Natural killer cell (primary cell): ENCODE measurements at regions of chr10 and their contacts with region 1.

Region 1: DNA sequence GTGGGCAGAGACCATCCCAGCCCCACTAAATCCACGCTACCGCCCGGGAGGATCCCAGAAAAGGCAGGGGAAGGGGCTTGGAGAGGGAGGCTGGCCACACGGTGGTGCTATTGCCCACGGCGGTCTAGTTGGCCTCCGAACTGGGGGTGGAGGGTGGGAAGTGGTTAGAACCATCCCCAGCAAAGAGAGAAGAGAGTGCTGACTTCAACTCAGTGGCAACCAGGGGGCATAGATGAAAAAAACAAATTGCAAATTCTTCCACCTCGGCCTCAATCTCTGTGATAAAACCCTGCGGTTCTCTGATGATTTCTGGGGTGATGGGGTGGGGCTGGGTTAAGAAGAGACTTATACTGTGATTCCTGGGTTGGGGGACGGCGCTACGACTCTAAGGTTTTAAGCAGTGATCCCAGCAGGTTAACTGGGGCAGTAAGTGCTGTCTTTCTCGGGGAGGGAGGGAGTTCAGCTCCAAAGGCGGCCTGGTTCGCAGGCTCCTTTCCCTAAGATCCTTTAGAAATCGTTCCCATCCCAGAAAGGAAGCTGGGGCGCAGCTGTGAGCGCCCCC is 154.5 kb upstream of the LYZL2 start:
- DNase-seq: peak; percentile 63 to 93
- ATAC-seq: peak; percentile 89 to 92 (median 92)
- H3K4me3 ChIP-seq: peak overlapping the region; percentile 43
- H3K4me3 Mint-ChIP-seq: peak overlapping the region; percentile 88
- H3K27ac ChIP-seq: peak overlapping the region; percentile 46
- H3K27ac Mint-ChIP-seq: peak overlapping the region in 1 of 2 donors; percentile 71
- H3K4me1 ChIP-seq: peaks cover 30% of the 10 kb centered on the region
- H3K4me1 Mint-ChIP-seq: peaks cover 11% of the 10 kb centered on the region in 2 donors
- H3K27me3 ChIP-seq: no peaks in the 10 kb centered on the region
- H3K27me3 Mint-ChIP-seq: peaks cover 8 to 15% of the 10 kb centered on the region in 2 donors
- CTCF ChIP-seq: peak; percentile 45

Region 2: DNA sequence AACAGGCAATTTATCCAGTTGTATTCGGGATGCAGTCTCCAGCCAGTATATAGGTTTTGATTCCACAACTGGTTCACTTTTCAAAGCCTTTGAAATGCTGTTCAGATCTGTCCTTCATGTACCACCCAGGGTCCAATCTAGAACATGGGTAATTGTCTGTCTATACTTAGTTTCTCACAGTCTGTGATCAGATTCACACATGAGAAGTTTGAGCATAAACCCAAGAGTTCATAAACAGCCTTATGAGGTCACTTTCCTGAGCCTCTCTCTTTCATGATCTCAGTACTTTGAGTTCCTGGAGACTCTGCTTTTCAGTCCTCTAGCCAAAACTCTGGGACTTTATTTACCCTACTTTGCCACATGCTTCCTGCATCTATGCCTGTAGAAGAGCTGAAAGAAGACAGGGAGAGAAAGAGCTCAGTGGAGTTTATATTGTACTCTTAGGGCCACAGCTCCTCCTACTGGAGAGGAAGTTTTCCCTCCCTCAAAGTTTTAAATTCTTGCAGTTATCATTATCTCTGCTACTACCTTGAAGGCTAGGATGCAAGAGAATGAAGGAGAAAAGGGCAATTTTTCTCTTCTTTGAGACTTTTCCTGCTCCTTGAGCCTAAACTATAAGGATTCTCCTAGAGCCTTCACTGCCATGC is 707.0 kb after region 1 on chr10:
- intact Hi-C with region 1: loop called (anchors 1 kb)
- DNase-seq: peak in 1 of 2 donors; percentile 64
- ATAC-seq: peak in 2 of 3 donors; percentile 47 to 49
- H3K4me3 ChIP-seq: no peak overlapping the region
- H3K4me3 Mint-ChIP-seq: no peak overlapping the region
- H3K27ac ChIP-seq: no peak overlapping the region
- H3K27ac Mint-ChIP-seq: no peak overlapping the region
- H3K4me1 ChIP-seq: no peaks in the 10 kb centered on the region
- H3K4me1 Mint-ChIP-seq: no peaks in the 10 kb centered on the region
- H3K27me3 ChIP-seq: no peaks in the 10 kb centered on the region
- H3K27me3 Mint-ChIP-seq: no peaks in the 10 kb centered on the region
- CTCF ChIP-seq: peak; percentile 29

Region 3: DNA sequence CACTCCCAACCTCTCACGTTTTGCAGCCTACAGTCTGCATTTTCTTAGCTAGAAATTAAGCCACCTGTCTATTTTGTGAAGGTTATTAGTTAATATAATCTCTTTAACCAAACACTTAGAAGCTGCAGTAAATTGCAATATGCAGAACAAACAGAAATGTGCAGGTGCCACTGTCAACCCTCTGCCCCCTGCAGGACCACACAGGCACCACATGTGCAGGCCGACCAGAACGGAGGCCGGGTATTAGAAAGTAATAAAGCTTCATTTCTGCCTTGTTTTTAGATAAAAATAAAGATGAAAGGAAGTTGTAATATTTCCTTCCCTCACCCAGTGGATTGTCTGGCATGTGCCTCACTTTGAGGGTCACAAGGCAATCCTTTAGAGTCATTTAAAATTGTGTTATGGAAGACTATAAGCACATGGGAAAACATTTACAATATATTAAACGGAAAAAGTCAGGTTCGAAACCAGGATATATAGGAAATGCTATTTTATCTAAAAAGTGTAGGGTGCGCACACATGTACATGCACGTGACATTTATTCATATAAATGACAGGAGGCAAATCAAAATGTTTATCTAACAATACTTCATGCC is 986.4 kb after region 1 on chr10:
- intact Hi-C with region 1: loop called (anchors 1 kb)
- DNase-seq: peak; percentile 37 to 75
- ATAC-seq: peak; percentile 77 to 96 (median 87)
- H3K4me3 ChIP-seq: no peak overlapping the region
- H3K4me3 Mint-ChIP-seq: no peak overlapping the region
- H3K27ac ChIP-seq: no peak overlapping the region
- H3K27ac Mint-ChIP-seq: no peak overlapping the region
- H3K4me1 ChIP-seq: no peaks in the 10 kb centered on the region
- H3K4me1 Mint-ChIP-seq: no peaks in the 10 kb centered on the region
- H3K27me3 ChIP-seq: no peaks in the 10 kb centered on the region
- H3K27me3 Mint-ChIP-seq: no peaks in the 10 kb centered on the region
- CTCF ChIP-seq: peak; percentile 84

Region 4: DNA sequence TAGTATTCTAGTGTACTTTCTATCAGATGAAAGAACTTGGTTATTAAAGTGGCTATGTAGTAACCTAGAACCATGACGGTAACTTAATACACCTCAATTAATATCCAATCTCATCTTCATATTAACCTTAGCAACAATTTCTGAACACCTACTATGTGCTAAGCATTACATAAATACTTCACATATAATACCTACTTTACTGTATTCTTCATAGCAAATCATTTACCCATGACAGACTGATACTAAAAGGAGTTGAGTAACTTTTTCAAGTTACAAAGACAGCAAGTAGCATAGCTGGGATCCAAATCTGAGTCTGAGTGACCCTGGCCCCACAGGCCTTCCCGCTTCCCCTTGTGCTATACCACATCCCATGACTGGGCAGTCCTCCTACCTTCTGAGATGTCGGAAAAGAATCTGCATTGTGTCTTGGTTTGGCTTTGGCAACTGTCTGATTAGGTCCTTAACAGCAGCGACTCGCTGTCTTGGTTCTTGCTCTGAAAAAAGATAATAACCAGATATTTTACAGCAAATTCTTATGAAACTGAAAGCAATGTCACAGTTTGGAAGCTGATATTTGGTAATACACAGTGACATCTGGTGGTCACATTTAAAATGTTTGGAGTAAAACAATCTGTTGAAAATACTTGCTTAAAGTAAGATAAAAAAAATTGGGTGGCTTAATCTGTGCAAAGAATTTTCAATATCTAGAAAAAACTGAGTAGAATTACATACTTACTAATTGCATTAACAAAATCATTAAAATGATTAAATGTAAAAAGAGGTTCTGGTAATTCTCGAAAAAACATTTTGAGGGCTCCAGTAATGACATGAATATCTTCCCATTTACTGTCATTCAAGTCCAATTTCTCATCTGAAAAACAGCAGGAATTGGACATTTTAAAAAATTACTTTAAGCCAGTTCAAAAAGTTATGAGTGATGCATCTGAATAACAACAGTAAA is 1024.5 kb after region 1 on chr10:
- intact Hi-C with region 1: loop called (anchors 1 kb)
- DNase-seq: peak in 1 of 2 donors; percentile 77
- ATAC-seq: peak; percentile 68 to 86 (median 70)
- H3K4me3 ChIP-seq: no peak overlapping the region
- H3K4me3 Mint-ChIP-seq: peak overlapping the region; percentile 62
- H3K27ac ChIP-seq: peak overlapping the region; percentile 12
- H3K27ac Mint-ChIP-seq: peak overlapping the region; percentile 72 to 86
- H3K4me1 ChIP-seq: peaks cover 4% of the 10 kb centered on the region
- H3K4me1 Mint-ChIP-seq: peaks cover 7 to 10% of the 10 kb centered on the region in 2 donors
- H3K27me3 ChIP-seq: no peaks in the 10 kb centered on the region
- H3K27me3 Mint-ChIP-seq: no peaks in the 10 kb centered on the region
- CTCF ChIP-seq: peak; percentile 73